ENCODE measurements at regions of chr5 and their contacts with region 1.

Region 1: GRCh38 chr5:157718519-157718918 is 12.7 kb upstream of the THG1L start:
- DNase-seq: no peak
- H3K4me3 ChIP-seq: no peak overlapping the region
- CTCF ChIP-seq: peak; percentile 55

Region 2: GRCh38 chr5:157328277-157328912 is 390.1 kb before region 1 on chr5:
- CTCF ChIA-PET with region 1: interaction called, 51 read pairs
- POLR2A ChIA-PET with region 1: no interaction called
- DNase-seq: peak; percentile 38
- H3K4me3 ChIP-seq: peak overlapping the region; percentile 35
- CTCF ChIP-seq: peak; percentile 93

Region 3: DNA sequence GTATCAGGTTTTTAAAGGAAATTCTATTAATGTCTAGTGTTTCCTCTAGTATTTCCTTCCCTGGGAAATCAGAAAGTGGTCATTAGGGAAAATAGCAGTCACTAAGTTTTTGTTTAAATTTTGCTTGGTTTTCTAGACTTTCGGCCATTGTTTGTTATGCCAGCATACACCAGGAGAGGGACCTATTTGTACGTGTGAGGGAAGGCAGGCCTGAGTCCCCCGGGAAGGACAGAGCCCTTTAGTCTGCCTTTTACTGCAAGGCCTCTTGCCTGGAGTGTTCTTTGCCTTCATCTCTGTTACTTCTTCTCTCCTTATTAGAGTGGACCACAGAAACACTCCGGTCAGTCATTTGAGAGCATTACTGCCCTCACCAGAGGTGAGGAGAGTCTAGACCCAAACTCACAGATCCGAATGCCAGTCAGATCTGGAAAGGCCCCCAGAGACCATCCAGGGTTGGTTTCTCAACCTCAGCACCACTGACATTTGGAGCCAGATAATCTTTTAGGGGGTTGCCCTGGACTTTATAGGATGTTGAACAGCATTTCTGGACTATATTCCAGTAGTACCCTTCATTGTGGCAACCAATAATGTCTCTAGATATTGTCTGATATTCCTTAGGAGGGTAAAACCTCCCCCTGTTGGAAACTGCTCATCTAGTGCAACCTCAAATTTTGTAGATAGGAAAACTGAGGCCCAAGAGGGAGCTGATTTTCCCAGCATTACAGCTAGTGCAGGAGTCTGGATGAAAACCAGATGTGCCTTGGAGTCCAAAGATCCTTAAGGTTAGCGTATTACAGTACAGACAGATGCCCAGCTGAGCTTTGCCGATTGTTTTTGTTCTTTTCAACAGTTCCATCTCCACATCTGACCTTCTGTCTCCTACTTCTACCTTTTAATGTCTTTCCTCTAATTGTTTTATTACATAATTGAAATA is 351.5 kb before region 1 on chr5:
- CTCF ChIA-PET with region 1: interaction called, 11 read pairs
- POLR2A ChIA-PET with region 1: no interaction called
- DNase-seq: peak; percentile 68
- H3K4me3 ChIP-seq: no peak overlapping the region
- CTCF ChIP-seq: peak; percentile 76

Region 4: DNA sequence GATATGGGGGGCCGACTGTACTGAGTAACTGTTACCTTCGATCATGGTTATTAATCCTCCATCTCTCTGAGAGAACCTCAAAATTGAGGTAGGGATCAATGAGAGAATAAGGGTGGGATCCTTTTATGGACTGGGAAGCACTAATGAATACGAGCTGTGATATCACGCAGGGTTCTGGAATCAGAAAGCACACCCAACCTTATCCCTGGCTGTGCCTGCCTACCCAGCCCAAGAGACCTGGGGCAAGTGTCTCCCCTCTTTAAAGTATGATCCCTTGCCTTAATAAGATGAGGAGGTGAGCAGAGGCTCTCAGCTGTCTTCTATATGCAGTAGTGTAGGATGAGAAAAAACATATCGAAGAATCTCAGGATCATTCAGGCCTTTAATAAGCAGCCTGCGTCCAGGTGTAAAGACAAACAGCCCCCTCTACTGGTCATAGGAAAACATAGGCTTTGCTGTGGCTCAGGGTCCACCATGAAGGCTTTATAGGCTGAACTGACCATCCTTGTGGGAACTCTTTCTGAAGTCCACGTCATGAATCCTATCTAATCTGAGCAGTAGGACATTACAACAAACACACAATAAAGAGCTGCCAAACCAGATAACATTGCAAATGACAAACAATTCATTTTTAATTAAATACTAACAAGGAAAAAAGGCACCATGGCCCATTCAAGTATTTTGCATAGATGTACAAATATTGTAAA is 241.7 kb before region 1 on chr5:
- CTCF ChIA-PET with region 1: interaction called, 48 read pairs
- POLR2A ChIA-PET with region 1: no interaction called
- DNase-seq: peak; percentile 29
- H3K4me3 ChIP-seq: no peak overlapping the region
- CTCF ChIP-seq: peak; percentile 73

Region 5: DNA sequence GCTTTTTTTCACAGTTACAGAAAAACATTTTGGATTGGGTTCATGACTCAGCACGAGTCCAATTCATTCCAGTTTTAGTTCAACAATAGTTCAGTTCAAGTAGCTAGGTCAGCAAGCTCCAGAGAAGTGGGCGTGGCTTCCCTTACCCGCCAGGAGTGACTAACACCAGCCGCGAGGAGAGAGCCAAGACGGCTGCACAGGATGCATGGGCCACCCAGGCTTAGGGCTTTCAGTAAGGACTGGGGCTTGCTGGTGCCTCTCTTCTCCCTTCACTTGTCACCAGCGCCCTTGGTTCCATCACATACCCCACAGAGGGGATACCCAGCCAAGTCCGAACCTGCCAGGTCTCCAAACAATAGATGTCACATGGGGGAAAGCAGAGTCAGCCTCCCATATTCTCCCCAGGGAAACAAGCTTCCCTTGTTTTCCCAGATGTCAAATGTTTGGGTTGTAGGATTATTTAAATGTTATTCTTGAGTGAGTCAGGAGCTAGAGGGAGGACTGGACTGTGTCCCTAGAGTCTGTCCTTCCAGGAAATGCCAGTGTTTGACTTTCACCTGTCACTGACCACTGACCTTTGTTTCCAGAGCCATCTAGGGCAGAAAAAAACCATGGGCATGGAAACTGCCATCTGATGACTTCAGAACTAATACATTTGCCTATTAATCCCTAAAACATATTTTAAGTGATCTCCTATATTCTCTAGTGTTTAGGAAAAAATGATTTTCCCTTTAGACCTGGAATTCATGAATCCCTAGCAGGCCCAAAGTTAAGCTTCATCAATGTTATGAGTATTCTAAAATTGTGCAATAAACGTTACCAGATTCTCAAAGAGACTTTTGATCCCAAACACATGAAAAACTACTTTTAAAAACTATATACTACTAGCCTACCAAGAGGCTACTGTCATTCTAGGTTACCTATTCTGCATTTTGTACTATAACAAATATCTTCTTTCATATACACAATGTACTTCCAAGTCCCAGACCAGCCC is 206.6 kb before region 1 on chr5:
- CTCF ChIA-PET with region 1: interaction called, 11 read pairs
- POLR2A ChIA-PET with region 1: no interaction called
- DNase-seq: peak; percentile 92
- H3K4me3 ChIP-seq: no peak overlapping the region
- CTCF ChIP-seq: no peak

Region 6: DNA sequence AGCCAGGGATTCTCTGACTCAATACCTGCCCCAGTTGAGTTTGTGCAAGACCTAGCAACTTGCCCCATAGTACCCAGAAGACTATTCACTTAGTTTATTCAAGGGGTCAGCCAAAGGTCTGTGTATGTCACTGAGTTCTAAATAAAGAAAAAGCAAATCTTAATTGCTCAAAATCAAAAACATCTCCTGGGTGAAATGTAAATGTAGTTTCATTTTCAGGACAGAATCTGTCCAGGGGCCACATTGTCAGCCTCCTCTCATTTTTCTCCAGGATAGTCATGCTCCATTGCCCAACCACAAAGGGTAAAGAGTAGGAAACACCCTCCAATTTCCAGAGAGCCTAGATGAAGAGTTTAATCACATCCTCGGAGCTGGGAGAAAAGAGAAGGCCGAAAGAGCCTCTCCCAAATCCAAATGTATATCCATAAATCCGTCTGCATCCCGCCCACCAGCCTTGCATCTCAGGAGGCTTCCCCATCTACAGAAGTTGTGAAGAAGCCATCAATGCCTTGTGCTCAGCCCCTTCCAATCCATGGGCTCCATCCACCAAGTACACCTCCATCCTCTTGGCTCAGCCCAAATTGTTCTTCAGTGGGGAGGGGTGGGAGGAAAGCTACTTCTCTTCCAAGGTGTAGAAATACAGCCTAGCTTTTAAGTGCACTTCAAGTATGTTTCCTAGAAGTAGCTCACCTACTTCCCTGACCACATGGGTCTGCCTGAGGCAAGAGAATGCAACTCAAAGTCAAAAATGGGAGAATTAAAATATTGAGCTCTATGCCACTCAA is 169.8 kb before region 1 on chr5:
- CTCF ChIA-PET with region 1: interaction called, 16 read pairs
- POLR2A ChIA-PET with region 1: interaction called, 3 read pairs
- DNase-seq: peak; percentile 88
- H3K4me3 ChIP-seq: peak overlapping the region; percentile 24; the same call in 1 of the 2 replicates
- CTCF ChIP-seq: no peak

Region 7: DNA sequence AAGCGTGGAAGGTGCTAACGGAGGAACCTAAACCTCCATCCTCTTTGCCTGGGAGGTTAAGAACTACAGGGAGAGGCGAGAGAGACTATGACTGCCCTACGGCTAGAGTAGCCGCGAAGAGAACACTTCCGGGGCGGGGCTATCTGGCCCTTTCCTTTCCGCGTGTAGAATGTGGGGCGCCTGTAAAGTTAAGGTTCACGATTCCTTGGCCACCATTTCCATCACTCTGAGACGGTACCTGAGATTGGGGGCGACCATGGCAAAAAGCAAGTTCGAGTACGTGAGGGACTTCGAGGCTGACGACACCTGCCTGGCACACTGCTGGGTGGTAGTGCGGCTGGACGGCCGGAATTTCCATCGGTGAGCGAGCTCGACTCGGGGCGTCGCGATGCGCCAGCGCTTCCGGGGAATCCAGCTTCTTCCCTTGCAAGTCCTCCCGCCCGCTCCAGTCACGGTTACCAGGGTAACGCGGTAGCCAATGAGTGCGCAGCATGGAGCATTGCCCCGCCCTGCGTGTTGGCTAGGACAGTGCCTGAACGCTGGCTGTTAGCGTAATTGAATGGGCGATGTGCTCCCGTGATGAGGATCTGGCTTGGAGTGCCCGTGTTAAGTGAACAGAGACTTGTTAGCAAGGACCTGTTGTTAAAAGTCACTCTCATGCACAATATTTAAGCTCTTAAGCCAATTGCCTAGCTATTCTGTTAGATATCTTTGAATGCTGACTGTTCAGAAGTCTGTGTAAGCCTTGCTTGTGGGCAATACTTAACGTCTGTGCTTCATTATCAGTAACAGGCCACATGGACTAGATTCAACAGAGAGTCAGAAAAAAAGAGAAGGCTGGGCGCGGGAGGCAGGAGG is 13.0 kb after region 1 on chr5 and contains the start of gene THG1L:
- CTCF ChIA-PET with region 1: interaction called, 17 read pairs
- POLR2A ChIA-PET with region 1: interaction called, 4 read pairs
- DNase-seq: peak; percentile 81
- H3K4me3 ChIP-seq: peak within 1 kb of the TSS; percentile 94
- CTCF ChIP-seq: no peak

Region 8: GRCh38 chr5:157812086-157812485 is 93.6 kb after region 1 on chr5:
- CTCF ChIA-PET with region 1: no interaction called
- POLR2A ChIA-PET with region 1: no interaction called
- DNase-seq: no peak
- H3K4me3 ChIP-seq: no peak overlapping the region
- CTCF ChIP-seq: no peak